PC-3 (cell line): ENCODE measurements at regions of chr10 and their contacts with region 1.

Region 1: GRCh38 chr10:12264204-12264940 is 68.4 kb downstream of the CDC123 start:
- DNase-seq: peak; percentile 65
- ATAC-seq: peak; percentile 73
- H3K4me3 ChIP-seq: peak overlapping the region; percentile 39; the same call in 1 of the 2 replicates
- H3K27ac ChIP-seq: peak overlapping the region; percentile 81
- H3K4me1 ChIP-seq: peaks cover 14% of the 10 kb centered on the region
- H3K27me3 ChIP-seq: no peaks in the 10 kb centered on the region
- CTCF ChIP-seq: peak; percentile 68

Region 2: DNA sequence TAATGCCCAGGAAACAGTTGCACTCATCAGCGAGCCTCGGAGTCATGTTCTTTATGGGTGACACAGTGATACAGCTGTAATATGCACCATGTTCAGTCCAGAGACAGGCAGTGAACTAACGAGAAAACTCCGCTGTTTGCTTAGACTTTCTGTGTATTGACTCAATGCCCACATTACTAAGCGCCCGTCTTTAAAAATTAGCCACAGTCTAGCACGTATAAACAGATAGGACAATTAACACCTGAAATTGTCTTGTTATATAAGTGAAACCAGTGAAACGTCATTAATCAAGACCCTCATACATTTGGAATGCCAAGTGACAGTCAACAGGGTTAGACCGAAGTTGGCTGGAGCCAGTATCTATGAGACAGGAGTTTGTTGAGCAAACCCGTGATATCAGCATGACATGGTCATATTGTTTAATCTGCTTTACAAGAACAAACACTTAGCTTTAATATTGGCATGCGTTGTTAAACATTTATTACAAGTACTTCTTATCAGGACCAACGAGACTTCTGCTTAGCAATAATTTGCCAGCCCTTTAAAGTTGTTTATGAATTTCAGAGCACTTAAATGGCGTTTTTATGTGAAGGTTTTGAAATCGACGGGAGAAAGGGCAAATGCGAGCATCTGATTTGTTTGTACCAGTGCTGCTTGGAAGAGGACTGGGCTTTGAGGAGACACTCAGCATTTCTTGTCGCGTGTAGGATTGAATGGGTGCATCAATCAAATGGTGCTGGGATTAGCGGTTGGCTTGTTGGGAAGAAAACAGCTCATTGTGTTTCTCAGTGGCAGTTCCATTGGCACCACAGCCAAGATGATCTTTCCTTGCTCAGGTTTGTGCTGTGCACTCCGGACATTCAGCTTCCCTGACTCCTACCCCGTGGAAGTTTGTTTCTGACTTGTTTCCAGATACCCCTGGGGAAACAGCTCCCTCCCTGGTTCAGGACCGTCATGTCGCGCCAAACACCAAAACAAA is 141.3 kb after region 1 on chr10:
- CTCF ChIA-PET with region 1: no interaction called
- POLR2A ChIA-PET with region 1: interaction called, 3 read pairs
- intact Hi-C with region 1: loop called (anchors 2 kb)
- DNase-seq: peak; percentile 58
- ATAC-seq: peak; percentile 84
- H3K4me3 ChIP-seq: peak overlapping the region; percentile 56
- H3K27ac ChIP-seq: peak overlapping the region; percentile 80
- H3K4me1 ChIP-seq: peaks cover 20% of the 10 kb centered on the region
- H3K27me3 ChIP-seq: no peaks in the 10 kb centered on the region
- CTCF ChIP-seq: 0 out of 2 replicates have a peak, but pooled peaks have one; percentile 16

Region 3: DNA sequence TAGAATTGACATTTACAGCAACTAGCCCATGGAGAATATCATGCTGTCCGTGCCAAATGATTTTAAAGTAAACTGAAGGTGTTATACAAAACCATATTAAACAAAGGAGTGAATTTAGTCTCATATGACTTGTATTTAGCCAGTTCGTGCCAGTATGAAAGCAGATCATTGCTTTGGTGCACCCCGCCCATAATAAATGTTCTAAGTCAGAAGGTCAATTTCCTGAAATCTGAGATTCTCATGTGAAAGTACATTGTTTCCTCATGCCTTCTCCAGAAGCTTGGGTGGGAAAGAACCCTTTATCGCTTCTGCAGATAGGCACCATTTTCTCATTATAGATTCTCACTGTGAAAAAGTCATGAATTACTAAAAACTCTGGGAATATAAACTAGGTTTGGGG is 191.4 kb after region 1 on chr10:
- CTCF ChIA-PET with region 1: no interaction called
- POLR2A ChIA-PET with region 1: no interaction called
- intact Hi-C with region 1: loop called (anchors 2 kb)
- DNase-seq: peak; percentile 29
- ATAC-seq: peak; percentile 76
- H3K4me3 ChIP-seq: no peak overlapping the region
- H3K27ac ChIP-seq: peak overlapping the region; percentile 57
- H3K4me1 ChIP-seq: peaks cover 20% of the 10 kb centered on the region
- H3K27me3 ChIP-seq: no peaks in the 10 kb centered on the region
- CTCF ChIP-seq: no peak

Region 4: DNA sequence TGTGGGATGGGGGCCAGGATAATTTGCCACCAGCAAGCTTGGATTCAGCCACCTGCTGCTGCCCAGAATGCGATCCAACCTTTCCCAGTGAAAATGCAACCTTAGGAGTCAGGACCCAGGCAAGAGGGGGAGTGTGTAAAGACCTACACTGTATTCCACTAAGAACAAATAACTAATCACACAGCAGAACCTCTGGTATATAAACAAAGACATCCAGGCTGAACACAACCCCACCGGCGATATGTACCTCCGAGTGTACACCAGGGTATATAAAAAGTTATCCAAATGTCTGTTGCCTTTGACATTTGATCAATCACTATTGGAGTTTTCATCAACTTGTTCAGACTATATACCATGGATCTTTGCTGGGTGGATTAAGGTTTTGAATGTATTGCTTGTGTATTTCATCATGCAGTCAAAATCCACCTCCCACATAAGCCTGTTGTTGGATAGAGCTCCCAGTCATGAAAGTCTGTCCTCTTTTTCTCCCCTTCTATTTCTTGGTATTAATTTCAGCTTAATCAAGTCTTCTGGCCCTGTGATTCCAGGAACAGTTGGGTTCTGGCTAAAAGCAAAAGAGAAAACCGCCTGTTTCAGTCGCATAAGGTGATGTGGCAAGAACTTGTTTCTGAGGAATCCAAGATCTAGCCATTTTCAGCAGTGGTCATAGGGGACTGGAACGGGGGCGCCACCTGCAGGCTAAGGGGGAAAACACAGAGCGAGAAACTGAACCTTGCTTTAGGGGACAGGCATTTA is 446.4 kb after region 1 on chr10:
- CTCF ChIA-PET with region 1: interaction called, 3 read pairs
- POLR2A ChIA-PET with region 1: interaction called, 5 read pairs
- intact Hi-C with region 1: loop called (anchors 1 kb)
- DNase-seq: peak; percentile 63
- ATAC-seq: peak; percentile 25
- H3K4me3 ChIP-seq: no peak overlapping the region
- H3K27ac ChIP-seq: peak overlapping the region; percentile 100; the same call in 1 of the 2 replicates
- H3K4me1 ChIP-seq: peaks cover 62% of the 10 kb centered on the region
- H3K27me3 ChIP-seq: no peaks in the 10 kb centered on the region
- CTCF ChIP-seq: peak; percentile 76

Region 5: GRCh38 chr10:13074561-13075451 is 810.4 kb after region 1 on chr10:
- CTCF ChIA-PET with region 1: interaction called, 4 read pairs
- POLR2A ChIA-PET with region 1: no interaction called
- intact Hi-C with region 1: loop called (anchors 5 kb)
- DNase-seq: peak; percentile 59
- ATAC-seq: peak; percentile 94
- H3K4me3 ChIP-seq: no peak overlapping the region
- H3K27ac ChIP-seq: no peak overlapping the region
- H3K4me1 ChIP-seq: no peaks in the 10 kb centered on the region
- H3K27me3 ChIP-seq: no peaks in the 10 kb centered on the region
- CTCF ChIP-seq: peak; percentile 74